ENCODE measurements at regions of chr14 and their contacts with region 1.

Region 1: GRCh38 chr14:75577729-75578101 is 705 bp upstream of the FLVCR2 start:
- DNase-seq: peak; percentile 82
- ATAC-seq: peak; percentile 96
- H3K4me3 Mint-ChIP-seq: peak overlapping the region; percentile 77
- H3K27ac Mint-ChIP-seq: no peak overlapping the region
- H3K4me1 Mint-ChIP-seq: peaks cover 18% of the 10 kb centered on the region
- H3K27me3 Mint-ChIP-seq: peaks cover 5% of the 10 kb centered on the region

Region 2: GRCh38 chr14:75487155-75487671 is 90.5 kb before region 1 on chr14:
- CTCF ChIA-PET with region 1: interaction called, 16 read pairs
- POLR2A ChIA-PET with region 1: no interaction called
- DNase-seq: peak; percentile 44
- ATAC-seq: peak; percentile 75
- H3K4me3 Mint-ChIP-seq: no peak overlapping the region
- H3K27ac Mint-ChIP-seq: peak overlapping the region; percentile 28
- H3K4me1 Mint-ChIP-seq: peaks cover 29% of the 10 kb centered on the region
- H3K27me3 Mint-ChIP-seq: peaks cover 2% of the 10 kb centered on the region

Region 3: GRCh38 chr14:75514673-75515628 is 62.8 kb before region 1 on chr14:
- CTCF ChIA-PET with region 1: interaction called, 10 read pairs
- POLR2A ChIA-PET with region 1: no interaction called
- DNase-seq: peak; percentile 61
- ATAC-seq: peak; percentile 77
- H3K4me3 Mint-ChIP-seq: peak overlapping the region; percentile 79
- H3K27ac Mint-ChIP-seq: peak overlapping the region; percentile 95
- H3K4me1 Mint-ChIP-seq: peaks cover 36% of the 10 kb centered on the region
- H3K27me3 Mint-ChIP-seq: no peaks in the 10 kb centered on the region

Region 4: GRCh38 chr14:75542588-75543091 is 35.1 kb before region 1 on chr14:
- CTCF ChIA-PET with region 1: interaction called, 13 read pairs
- POLR2A ChIA-PET with region 1: no interaction called
- DNase-seq: peak; percentile 77
- ATAC-seq: peak; percentile 86
- H3K4me3 Mint-ChIP-seq: peak overlapping the region; percentile 48
- H3K27ac Mint-ChIP-seq: peak overlapping the region; percentile 97
- H3K4me1 Mint-ChIP-seq: peaks cover 50% of the 10 kb centered on the region
- H3K27me3 Mint-ChIP-seq: no peaks in the 10 kb centered on the region

Region 5: DNA sequence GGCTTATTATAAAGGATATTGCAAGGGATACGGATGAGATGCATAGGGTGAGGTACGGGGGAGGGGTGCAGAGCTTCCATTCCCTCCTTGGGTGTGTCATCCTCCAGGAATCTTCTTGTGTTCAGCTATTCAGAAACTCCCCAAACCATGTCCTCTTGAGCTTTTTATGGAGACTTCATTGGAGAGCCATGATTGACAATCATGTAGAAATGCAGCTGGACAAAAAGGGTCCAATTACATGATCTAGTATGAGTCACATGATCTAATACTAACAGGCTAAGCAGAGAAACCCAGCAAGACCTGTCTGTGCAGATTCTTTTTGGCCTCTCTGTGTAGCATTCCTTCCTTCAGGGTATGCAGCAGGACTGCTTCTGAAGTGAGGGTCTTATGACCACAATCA is 23.2 kb before region 1 on chr14:
- CTCF ChIA-PET with region 1: interaction called, 49 read pairs
- POLR2A ChIA-PET with region 1: no interaction called
- DNase-seq: no peak
- ATAC-seq: no peak
- H3K4me3 Mint-ChIP-seq: no peak overlapping the region
- H3K27ac Mint-ChIP-seq: no peak overlapping the region
- H3K4me1 Mint-ChIP-seq: peaks cover 15% of the 10 kb centered on the region
- H3K27me3 Mint-ChIP-seq: no peaks in the 10 kb centered on the region

Region 6: GRCh38 chr14:75566321-75566720 is 11.4 kb before region 1 on chr14:
- CTCF ChIA-PET with region 1: interaction called, 49 read pairs
- POLR2A ChIA-PET with region 1: interaction called, 4 read pairs
- DNase-seq: peak; percentile 78
- ATAC-seq: peak; percentile 95
- H3K4me3 Mint-ChIP-seq: no peak overlapping the region
- H3K27ac Mint-ChIP-seq: peak overlapping the region; percentile 48
- H3K4me1 Mint-ChIP-seq: peaks cover 49% of the 10 kb centered on the region
- H3K27me3 Mint-ChIP-seq: no peaks in the 10 kb centered on the region

Region 7: DNA sequence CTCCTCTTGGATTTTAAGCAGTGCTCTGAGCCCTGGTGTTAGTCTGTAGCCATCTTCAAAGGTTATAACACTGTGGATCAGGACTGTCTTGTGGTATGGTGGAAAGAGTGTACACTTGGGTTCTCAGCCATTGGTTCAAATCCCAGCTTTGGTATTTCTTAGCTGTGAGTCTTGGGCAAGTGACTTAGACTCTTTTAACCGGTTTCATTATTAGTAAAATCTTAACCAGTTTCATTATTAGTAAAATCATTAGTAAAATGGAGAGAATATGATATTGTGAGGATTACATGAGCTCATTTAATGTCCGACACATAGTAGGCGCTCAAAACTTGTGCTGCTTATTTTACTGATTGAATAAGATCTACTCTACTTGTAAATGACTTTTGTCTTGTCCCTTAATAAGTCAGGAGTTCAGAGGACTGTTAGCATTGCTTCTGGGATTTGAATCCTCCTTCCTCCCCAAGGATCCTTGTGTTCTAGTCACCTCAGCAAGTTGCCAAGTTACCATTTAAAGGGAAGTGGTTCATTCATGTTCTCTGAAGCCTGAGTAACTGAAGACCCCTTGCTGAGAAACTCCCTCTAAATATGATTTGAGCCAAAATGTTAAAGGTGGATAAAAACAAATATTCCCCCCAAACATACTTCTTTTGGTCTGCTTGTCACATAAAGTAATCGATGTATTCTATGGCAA is 95.8 kb after region 1 on chr14:
- CTCF ChIA-PET with region 1: interaction called, 12 read pairs
- POLR2A ChIA-PET with region 1: no interaction called
- DNase-seq: no peak
- ATAC-seq: no peak
- H3K4me3 Mint-ChIP-seq: no peak overlapping the region
- H3K27ac Mint-ChIP-seq: no peak overlapping the region
- H3K4me1 Mint-ChIP-seq: peaks cover 13% of the 10 kb centered on the region
- H3K27me3 Mint-ChIP-seq: no peaks in the 10 kb centered on the region

Measured in activated CD8-positive, alpha-beta T cell treated with anti-CD3 and anti-CD28 coated beads, Interleukin-2, amount 10 ng/mL, durations not matched to agents 7 days and 5 days (primary cell).